ENCODE measurements at regions of chr19 and their contacts with region 1.

Region 1: GRCh38 chr19:50607874-50608785 is 31.6 kb downstream of the SYT3 start:
- DNase-seq: peak; percentile 91 to 99 (median 93)
- ATAC-seq: peak; percentile 93
- H3K4me3 ChIP-seq: no peak overlapping the region
- H3K27ac ChIP-seq: no peak overlapping the region
- H3K4me1 ChIP-seq: peaks cover 2 to 21% of the 10 kb centered on the region in 2 experiments
- H3K27me3 ChIP-seq: no peaks in the 10 kb centered on the region
- CTCF ChIP-seq: peak; percentile 92 to 98 (median 94)
- EP300 ChIP-seq: no peak
- POLR2A ChIP-seq: no peak; the same call in 1 of the 2 replicates
- RAD21 ChIP-seq: peak; percentile 90 to 92

Region 2: GRCh38 chr19:50500060-50500752 is 107.9 kb before region 1 on chr19:
- CTCF ChIA-PET with region 1: no interaction called
- POLR2A ChIA-PET with region 1: no interaction called
- in situ Hi-C with region 1: no loop called
- intact Hi-C with region 1: no loop called
- DNase-seq: peak; percentile 76 to 86 (median 80)
- ATAC-seq: peak; percentile 89
- H3K4me3 ChIP-seq: no peak overlapping the region
- H3K27ac ChIP-seq: no peak overlapping the region
- H3K4me1 ChIP-seq: peaks cover 0 to 29% of the 10 kb centered on the region in 2 experiments; a peak in 3 of 5 replicates
- H3K27me3 ChIP-seq: no peaks in the 10 kb centered on the region
- CTCF ChIP-seq: peak; percentile 40 to 57 (median 41); a peak in 4 of 6 replicates
- EP300 ChIP-seq: peak; percentile 38; the same call in 1 of the 2 replicates
- POLR2A ChIP-seq: no peak
- RAD21 ChIP-seq: no peak

Region 3: GRCh38 chr19:50657712-50658440 is 49.7 kb after region 1 on chr19:
- CTCF ChIA-PET with region 1: interaction called, 11 read pairs
- POLR2A ChIA-PET with region 1: no interaction called
- in situ Hi-C with region 1: no loop called
- intact Hi-C with region 1: loop called (anchors 2 kb)
- DNase-seq: peak; percentile 96 to 100 (median 98)
- ATAC-seq: peak; percentile 88
- H3K4me3 ChIP-seq: peak overlapping the region; percentile 66
- H3K27ac ChIP-seq: peak overlapping the region; percentile 98
- H3K4me1 ChIP-seq: peaks cover 20 to 51% of the 10 kb centered on the region in 2 experiments
- H3K27me3 ChIP-seq: no peaks in the 10 kb centered on the region; a peak in 1 of 5 replicates
- CTCF ChIP-seq: no peak; a peak in 1 of 6 replicates
- EP300 ChIP-seq: no peak; the same call in 1 of the 2 replicates
- POLR2A ChIP-seq: peak; percentile 82; the same call in 1 of the 2 replicates
- RAD21 ChIP-seq: no peak

Region 4: DNA sequence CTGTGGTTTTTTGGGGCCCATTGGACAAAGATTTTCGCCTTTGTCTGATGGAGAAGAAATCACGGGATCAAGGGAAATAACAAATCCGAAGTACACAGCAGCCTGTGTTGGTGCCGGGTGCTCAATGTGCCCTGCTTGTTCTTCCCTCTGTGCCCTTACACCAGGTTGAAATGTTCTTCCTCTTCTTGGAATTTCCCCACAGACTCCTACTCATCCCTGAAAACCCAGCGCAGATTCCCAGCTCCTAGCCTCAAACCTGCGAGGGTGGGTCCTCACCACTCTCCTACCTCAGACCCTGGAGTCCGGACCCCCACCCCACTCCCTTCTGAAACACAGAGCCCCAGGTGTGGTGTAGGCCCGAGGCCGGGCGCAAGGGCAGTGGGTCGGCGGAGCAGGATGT is 177.2 kb after region 1 on chr19:
- CTCF ChIA-PET with region 1: no interaction called
- POLR2A ChIA-PET with region 1: no interaction called
- in situ Hi-C with region 1: loop called (anchors 5 kb)
- intact Hi-C with region 1: loop called (anchors 5 kb)
- DNase-seq: no peak
- ATAC-seq: no peak
- H3K4me3 ChIP-seq: no peak overlapping the region
- H3K27ac ChIP-seq: no peak overlapping the region
- H3K4me1 ChIP-seq: peaks cover 7 to 15% of the 10 kb centered on the region in 2 experiments; a peak in 4 of 5 replicates
- H3K27me3 ChIP-seq: no peaks in the 10 kb centered on the region
- CTCF ChIP-seq: no peak
- EP300 ChIP-seq: no peak
- POLR2A ChIP-seq: no peak
- RAD21 ChIP-seq: no peak